Heart left ventricle (tissue), 16 donors: ENCODE measurements at regions of chr1 and their contacts with region 1.

Region 1: GRCh38 chr1:95035536-95035935 is 37.2 kb downstream of the ALG14 start:
- DNase-seq: no peak
- ATAC-seq: no peak
- H3K4me3 ChIP-seq: no peak overlapping the region
- H3K27ac ChIP-seq: no peak overlapping the region
- H3K4me1 ChIP-seq: no peaks in the 10 kb centered on the region
- H3K27me3 ChIP-seq: no peaks in the 10 kb centered on the region
- CTCF ChIP-seq: no peak
- POLR2A ChIP-seq: no peak

Region 2: DNA sequence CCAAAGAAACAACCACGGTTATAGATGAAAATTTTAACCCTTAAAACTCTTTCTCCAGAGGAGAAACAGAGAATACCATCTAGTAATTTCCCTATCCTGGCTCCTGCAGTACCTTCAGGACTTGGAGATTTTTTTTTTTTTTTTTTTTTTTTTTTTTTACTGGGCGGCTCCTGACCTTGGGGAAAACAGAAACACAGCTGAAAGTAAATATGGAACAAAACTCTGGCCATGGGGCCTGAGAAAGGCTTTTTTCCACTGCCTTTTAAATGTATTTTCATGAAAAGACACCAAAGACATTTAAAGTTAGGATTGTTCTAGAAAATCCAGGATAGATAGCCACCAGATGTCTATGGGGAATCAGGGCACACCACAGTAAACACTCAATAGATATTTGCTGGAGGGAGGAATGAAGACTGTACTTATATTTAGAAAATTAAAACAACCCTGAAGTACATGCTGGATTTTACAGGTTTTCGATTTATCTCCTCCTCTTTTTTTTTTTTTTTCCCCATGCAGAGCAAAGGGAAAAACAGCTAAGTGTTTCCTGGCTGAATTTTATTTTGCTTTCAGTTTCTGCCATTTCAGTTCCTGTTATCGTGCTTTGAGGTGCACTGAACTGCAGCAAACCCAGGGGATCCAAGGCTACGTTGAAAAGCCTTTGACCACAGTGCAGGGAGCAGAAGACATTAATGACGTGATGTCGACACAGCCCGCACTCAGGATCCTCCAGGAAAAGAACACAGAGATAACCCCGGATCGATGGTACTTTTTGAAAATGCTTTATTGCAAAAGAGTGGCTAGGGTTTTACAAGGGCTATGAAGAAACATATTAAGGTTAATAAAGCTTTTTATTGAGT is 72.9 kb before region 1 on chr1:
- intact Hi-C with region 1: loop called in 2 of 10 experiments (anchors 5 to 10 kb)
- DNase-seq: peak in 2 of 5 donors; percentile 29 to 31
- ATAC-seq: peak in 3 of 4 donors; percentile 74 to 80 (median 74)
- H3K4me3 ChIP-seq: peak overlapping the region in 11 of 12 donors; percentile 12 to 57 (median 46)
- H3K27ac ChIP-seq: peak overlapping the region; percentile 48 to 89 (median 78)
- H3K4me1 ChIP-seq: peaks cover 0 to 25% (median 7%) of the 10 kb centered on the region in 12 donors
- H3K27me3 ChIP-seq: no peaks in the 10 kb centered on the region
- CTCF ChIP-seq: no peak
- POLR2A ChIP-seq: no peak